Natural killer cell (primary cell): ENCODE measurements at regions of chr7 and their contacts with region 1.

Region 1: GRCh38 chr7:107890962-107891635 is at the start of gene DLD:
- DNase-seq: peak; percentile 94 to 97
- ATAC-seq: peak; percentile 91 to 97 (median 94)
- H3K4me3 ChIP-seq: peak within 1 kb of the TSS; percentile 75
- H3K4me3 Mint-ChIP-seq: peak within 1 kb of the TSS; percentile 97
- H3K27ac ChIP-seq: peak within 1 kb of the TSS; percentile 95
- H3K27ac Mint-ChIP-seq: peak within 1 kb of the TSS; percentile 97 to 98
- H3K4me1 ChIP-seq: peaks cover 15% of the 10 kb centered on the region
- H3K4me1 Mint-ChIP-seq: peaks cover 44 to 50% of the 10 kb centered on the region in 2 donors
- H3K27me3 ChIP-seq: no peaks in the 10 kb centered on the region
- H3K27me3 Mint-ChIP-seq: no peaks in the 10 kb centered on the region
- CTCF ChIP-seq: no peak
- total RNA-seq, gene DLD: 72.2 to 81.4 (median 80.9) TPM

Region 2: DNA sequence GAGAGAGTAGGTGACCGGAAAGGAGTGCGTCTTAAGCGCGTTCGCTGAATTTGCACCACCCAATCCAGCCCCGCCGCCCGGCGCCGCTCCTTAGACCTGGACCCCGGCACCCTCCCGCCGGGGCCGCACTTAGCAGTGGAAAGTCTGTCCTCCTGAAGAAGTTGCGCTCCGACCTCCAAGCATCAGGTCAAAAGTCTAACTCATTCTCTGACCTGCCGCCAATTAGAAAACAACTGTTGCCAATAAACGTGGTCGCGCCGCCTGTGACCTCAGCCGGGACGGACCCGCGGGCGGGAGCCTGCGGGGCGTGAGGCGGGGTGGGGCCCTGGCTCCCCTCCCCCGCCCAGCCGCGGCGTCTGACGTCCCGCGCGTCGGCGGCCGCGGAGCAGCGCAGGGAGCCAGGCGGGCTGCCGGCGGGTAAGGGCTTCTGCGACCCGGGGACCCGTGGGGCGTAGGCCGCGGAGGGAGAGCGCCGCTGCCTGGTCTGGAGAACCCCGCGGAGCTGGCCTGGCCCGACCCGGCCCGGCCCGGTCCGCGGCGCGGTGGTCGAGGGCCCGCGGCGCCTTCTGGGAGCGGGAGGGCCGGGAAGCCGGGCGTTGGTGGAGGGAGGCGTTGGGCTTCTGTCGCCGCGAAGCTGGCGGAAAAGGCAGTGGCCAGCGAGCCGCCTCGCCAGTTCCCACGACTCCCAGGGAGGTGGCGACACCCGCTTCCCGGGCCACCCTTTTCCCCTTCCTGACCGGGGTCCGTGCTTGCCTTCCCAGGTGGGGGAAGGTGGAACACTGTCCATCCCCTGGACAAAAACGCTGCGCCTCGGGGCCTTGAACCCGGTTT is 311.0 kb before region 1 on chr7 and contains the start of gene BCAP29:
- intact Hi-C with region 1: loop called (anchors 10 kb)
- DNase-seq: peak; percentile 65 to 85
- ATAC-seq: peak; percentile 93 to 96 (median 96)
- H3K4me3 ChIP-seq: peak within 1 kb of the TSS; percentile 96
- H3K4me3 Mint-ChIP-seq: peak within 1 kb of the TSS; percentile 92
- H3K27ac ChIP-seq: peak within 1 kb of the TSS; percentile 77
- H3K27ac Mint-ChIP-seq: peak within 1 kb of the TSS; percentile 66 to 89
- H3K4me1 ChIP-seq: peaks cover 4% of the 10 kb centered on the region
- H3K4me1 Mint-ChIP-seq: peaks cover 15 to 20% of the 10 kb centered on the region in 2 donors
- H3K27me3 ChIP-seq: no peaks in the 10 kb centered on the region
- H3K27me3 Mint-ChIP-seq: no peaks in the 10 kb centered on the region
- CTCF ChIP-seq: no peak
- total RNA-seq, gene BCAP29: 22.1 to 33.3 (median 27.1) TPM

Region 3: DNA sequence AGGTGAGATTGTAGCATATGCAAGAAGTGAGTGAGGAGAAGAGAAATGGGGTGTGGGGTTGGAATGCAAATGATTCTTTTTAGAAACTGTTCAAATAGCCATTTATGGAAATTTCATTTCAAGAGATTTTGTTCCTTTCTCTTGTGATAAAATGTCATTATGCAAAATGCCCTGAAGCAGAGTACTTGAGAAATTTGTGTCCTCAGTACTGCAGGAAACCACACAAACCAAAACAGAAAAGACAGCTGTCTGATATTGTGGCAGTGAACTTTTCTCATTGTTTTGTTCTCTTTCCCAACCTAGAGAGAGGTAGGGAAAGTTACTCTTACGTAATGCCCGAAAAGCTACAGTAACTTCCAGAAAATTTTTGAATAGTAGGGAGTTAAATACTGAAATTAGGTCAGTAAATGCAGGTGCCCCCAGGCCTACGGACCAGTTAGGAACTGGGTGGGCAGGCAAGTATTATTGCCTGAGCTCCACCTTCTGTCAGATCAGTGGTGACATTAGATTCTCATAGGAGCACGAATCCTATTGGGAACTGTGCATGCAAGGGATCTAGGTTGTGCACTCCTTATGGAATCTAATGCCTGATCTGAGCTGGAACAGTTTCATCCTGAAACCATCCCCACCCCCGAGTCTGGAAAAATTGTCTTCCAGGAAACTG is 33.9 kb after region 1 on chr7:
- intact Hi-C with region 1: no loop called
- DNase-seq: peak in 1 of 2 donors; percentile 29
- ATAC-seq: peak in 2 of 3 donors; percentile 48 to 66
- H3K4me3 ChIP-seq: no peak overlapping the region
- H3K4me3 Mint-ChIP-seq: peak overlapping the region; percentile 43
- H3K27ac ChIP-seq: no peak overlapping the region
- H3K27ac Mint-ChIP-seq: peak overlapping the region; percentile 12 to 16
- H3K4me1 ChIP-seq: peaks cover 4% of the 10 kb centered on the region
- H3K4me1 Mint-ChIP-seq: peaks cover 26 to 39% of the 10 kb centered on the region in 2 donors
- H3K27me3 ChIP-seq: no peaks in the 10 kb centered on the region
- H3K27me3 Mint-ChIP-seq: no peaks in the 10 kb centered on the region
- CTCF ChIP-seq: no peak

Region 4: GRCh38 chr7:107939573-107940489 is 48.7 kb after region 1 on chr7:
- intact Hi-C with region 1: no loop called
- DNase-seq: no peak
- ATAC-seq: no peak
- H3K4me3 ChIP-seq: no peak overlapping the region
- H3K4me3 Mint-ChIP-seq: no peak overlapping the region
- H3K27ac ChIP-seq: no peak overlapping the region
- H3K27ac Mint-ChIP-seq: no peak overlapping the region
- H3K4me1 ChIP-seq: no peaks in the 10 kb centered on the region
- H3K4me1 Mint-ChIP-seq: no peaks in the 10 kb centered on the region
- H3K27me3 ChIP-seq: no peaks in the 10 kb centered on the region
- H3K27me3 Mint-ChIP-seq: no peaks in the 10 kb centered on the region
- CTCF ChIP-seq: no peak